Left cardiac atrium (tissue), 4 donors: ENCODE measurements at regions of chr3 and their contacts with region 1.

Region 1: DNA sequence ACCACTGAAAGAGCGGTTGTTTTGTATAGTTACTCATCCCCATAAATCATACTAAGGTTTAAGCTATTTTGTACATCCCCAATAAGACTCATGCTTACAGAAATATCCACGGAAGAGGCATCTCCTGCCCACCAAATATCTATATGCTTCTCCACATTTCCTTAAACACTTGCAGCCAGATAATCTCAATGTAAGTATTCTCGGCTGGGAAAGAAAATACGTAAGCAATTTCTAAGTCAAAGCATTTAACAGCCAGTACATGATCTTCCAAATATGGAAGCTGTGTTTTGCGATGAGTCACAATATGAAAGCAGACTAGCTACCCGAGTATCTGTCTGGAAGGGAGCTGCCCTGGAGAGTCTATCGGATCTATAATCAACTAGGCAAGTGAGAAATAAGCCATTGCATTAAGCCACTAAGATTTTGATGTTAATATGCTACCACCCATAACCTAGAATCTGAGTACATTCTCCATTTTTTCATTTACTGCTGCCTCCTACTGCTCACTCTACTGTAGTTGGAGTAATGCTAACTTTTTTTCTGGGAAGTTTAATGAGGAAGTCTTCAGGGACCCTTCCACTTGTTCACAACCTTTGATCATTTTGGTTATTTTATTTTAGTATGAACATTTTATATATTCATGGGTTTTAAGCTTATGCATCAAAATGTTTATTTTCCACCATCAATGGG is 26.9 kb upstream of the ZMAT3 start:
- DNase-seq: no peak
- ATAC-seq: no peak

Region 2: DNA sequence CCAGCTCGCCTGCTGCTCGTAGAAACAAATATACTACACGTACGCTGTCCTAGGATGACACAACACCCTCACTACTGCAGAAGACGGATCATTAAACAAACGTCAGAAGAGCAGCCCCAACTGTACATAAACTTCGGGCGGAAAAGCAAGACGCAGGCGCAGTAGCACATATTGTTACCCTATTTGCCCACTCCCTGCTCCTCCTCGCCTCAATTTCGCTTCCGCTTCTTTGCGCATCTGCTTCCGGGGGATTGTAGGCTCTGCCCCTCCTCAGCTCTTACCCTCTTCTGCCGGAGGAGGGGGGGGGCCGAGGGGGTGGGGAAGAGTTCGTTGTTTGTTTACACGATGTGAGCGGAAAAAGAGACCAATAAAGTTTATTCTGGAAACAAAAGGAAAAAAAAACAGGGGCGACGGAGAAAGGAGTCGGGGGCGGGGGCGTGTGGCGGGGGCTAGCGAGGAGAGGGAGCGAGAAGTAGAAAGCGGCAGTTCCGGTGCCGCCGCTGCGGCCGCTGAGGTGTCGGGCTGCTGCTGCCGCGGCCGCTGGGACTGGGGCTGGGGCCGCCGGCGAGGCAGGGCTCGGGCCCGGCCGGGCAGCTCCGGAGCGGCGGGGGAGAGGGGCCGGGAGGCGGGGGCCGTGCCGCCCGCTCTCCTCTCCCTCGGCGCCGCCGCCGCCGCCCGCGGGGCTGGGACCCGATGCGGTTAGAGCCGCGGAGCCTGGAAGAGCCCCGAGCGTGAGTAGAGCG is 49.5 kb after region 1 on chr3 and contains the start of gene PIK3CA:
- intact Hi-C with region 1: no loop called
- DNase-seq: peak; percentile 95
- ATAC-seq: peak; percentile 97
- total RNA-seq, gene PIK3CA: 22.0 to 23.1 TPM

Region 3: GRCh38 chr3:179309225-179310078 is 210.9 kb after region 1 on chr3:
- intact Hi-C with region 1: loop called in 1 of 2 experiments (anchors 10 kb)
- DNase-seq: no peak
- ATAC-seq: no peak

Region 4: DNA sequence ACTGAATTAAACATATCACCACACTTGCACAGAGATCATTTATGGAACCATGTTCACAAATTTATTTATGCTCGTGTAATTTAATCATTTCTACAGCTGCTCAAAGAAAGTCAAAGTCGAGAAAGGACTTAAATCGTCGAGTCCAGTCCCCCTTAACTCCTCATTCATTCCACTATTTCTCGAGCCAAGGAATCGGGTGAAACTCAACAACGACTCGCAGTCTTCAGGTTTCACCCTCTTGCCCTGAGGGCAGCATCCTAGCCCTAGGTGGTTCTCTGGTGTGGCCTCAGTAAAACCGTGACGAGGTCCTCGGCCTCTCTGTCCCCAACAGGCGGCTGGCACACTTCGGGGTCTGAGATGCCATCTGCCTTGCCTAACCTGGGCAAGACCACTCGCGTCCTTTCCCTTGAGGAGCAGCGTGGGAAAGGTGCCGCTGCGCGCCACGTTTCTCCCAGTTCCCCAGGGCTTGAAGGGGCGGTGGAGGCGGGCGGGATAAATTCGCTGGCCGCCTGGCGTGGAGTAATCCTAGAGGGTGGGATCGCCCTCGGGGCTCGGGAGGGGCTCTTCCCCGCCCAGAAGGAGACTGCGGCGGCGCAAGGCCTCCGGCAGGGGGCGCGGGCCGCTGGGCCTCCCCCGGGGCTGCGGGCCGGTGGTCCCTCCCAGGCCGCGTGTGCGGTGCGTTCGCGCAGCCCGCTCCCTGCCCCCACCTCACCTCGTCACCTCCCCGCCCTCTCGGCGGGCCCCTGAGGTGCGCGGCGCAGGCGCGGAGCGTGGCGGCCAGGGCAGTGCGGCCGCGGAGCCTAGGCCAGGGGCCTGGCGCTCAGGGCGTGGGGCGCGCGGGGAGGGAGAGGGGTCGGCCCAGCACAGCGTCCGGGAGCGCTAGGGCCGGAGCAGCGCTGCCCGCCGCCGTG is 224.0 kb after region 1 on chr3 and contains the start of gene ZNF639:
- intact Hi-C with region 1: loop called (anchors 2 to 10 kb)
- DNase-seq: peak; percentile 87
- ATAC-seq: peak; percentile 90 to 92
- total RNA-seq, gene ZNF639: 23.5 to 39.4 TPM

Region 5: GRCh38 chr3:179464323-179465089 is 366.0 kb after region 1 on chr3:
- intact Hi-C with region 1: no loop called
- DNase-seq: no peak
- ATAC-seq: no peak